B cell (primary cell): ENCODE measurements at regions of chr10 and their contacts with region 1.

Region 1: GRCh38 chr10:119207367-119207668 is at the start of gene GRK5:
- DNase-seq: peak; percentile 98
- ATAC-seq: peak; percentile 83
- H3K4me3 ChIP-seq: peak within 1 kb of the TSS; percentile 44 to 94 (median 74)
- H3K4me3 Mint-ChIP-seq: peak within 1 kb of the TSS; percentile 95
- H3K27ac ChIP-seq: peak within 1 kb of the TSS; percentile 73 to 83
- H3K27ac Mint-ChIP-seq: peak within 1 kb of the TSS; percentile 95
- H3K4me1 ChIP-seq: peaks cover 27 to 38% of the 10 kb centered on the region in 2 donors
- H3K4me1 Mint-ChIP-seq: peaks cover 43% of the 10 kb centered on the region
- H3K27me3 ChIP-seq: no peaks in the 10 kb centered on the region
- H3K27me3 Mint-ChIP-seq: no peaks in the 10 kb centered on the region
- CTCF ChIP-seq: no peak
- total RNA-seq, gene GRK5: 54.8 and 57.2 TPM in 2 replicates

Region 2: DNA sequence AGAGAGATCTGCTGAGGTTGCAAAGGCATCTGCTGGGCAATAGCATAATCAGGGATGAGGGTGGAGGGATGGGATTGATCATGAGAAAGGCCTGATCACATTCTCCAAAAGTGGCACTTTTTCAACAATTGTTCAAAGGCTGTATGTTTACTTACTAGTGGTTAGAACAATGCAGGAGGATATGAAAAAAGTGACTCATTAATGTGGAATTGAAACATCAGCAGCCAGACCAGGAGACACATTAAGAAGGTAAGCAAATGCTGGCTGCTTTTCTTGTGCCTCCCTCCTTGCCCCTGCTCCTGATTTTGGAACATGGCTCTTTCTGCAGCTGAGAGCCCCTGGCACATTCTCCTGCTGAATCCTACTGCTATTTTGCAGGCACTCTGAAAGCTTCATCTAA is 928.7 kb before region 1 on chr10:
- CTCF ChIA-PET with region 1: no interaction called
- POLR2A ChIA-PET with region 1: no interaction called
- intact Hi-C with region 1: no loop called
- DNase-seq: no peak
- ATAC-seq: no peak
- H3K4me3 ChIP-seq: no peak overlapping the region
- H3K4me3 Mint-ChIP-seq: no peak overlapping the region
- H3K27ac ChIP-seq: no peak overlapping the region
- H3K27ac Mint-ChIP-seq: no peak overlapping the region
- H3K4me1 ChIP-seq: no peaks in the 10 kb centered on the region
- H3K4me1 Mint-ChIP-seq: no peaks in the 10 kb centered on the region
- H3K27me3 ChIP-seq: peaks cover 0 to 3% (median 2%) of the 10 kb centered on the region in 4 experiments
- H3K27me3 Mint-ChIP-seq: peaks cover 4% of the 10 kb centered on the region
- CTCF ChIP-seq: no peak

Region 3: GRCh38 chr10:119165171-119166110 is 41.9 kb before region 1 on chr10 and contains the start of gene SFXN4:
- CTCF ChIA-PET with region 1: interaction called, 4 read pairs
- POLR2A ChIA-PET with region 1: no interaction called
- intact Hi-C with region 1: loop called (anchors 1 kb)
- DNase-seq: peak; percentile 89
- ATAC-seq: peak; percentile 92
- H3K4me3 ChIP-seq: peak within 1 kb of the TSS; percentile 46 to 86 (median 79)
- H3K4me3 Mint-ChIP-seq: peak within 1 kb of the TSS; percentile 96
- H3K27ac ChIP-seq: peak within 1 kb of the TSS; percentile 72 to 80
- H3K27ac Mint-ChIP-seq: peak within 1 kb of the TSS; percentile 93
- H3K4me1 ChIP-seq: peaks cover 7 to 19% of the 10 kb centered on the region in 2 donors
- H3K4me1 Mint-ChIP-seq: peaks cover 20% of the 10 kb centered on the region
- H3K27me3 ChIP-seq: no peaks in the 10 kb centered on the region
- H3K27me3 Mint-ChIP-seq: no peaks in the 10 kb centered on the region
- CTCF ChIP-seq: no peak
- total RNA-seq, gene SFXN4: 8.4 and 9.8 TPM in 2 replicates

Region 4: GRCh38 chr10:119246862-119247549 is 39.7 kb after region 1 on chr10:
- CTCF ChIA-PET with region 1: interaction called, 7 read pairs
- POLR2A ChIA-PET with region 1: no interaction called
- intact Hi-C with region 1: loop called (anchors 5 kb)
- DNase-seq: no peak
- ATAC-seq: no peak
- H3K4me3 ChIP-seq: no peak overlapping the region
- H3K4me3 Mint-ChIP-seq: no peak overlapping the region
- H3K27ac ChIP-seq: no peak overlapping the region
- H3K27ac Mint-ChIP-seq: no peak overlapping the region
- H3K4me1 ChIP-seq: peaks cover 0 to 8% of the 10 kb centered on the region in 2 donors
- H3K4me1 Mint-ChIP-seq: peaks cover 33% of the 10 kb centered on the region
- H3K27me3 ChIP-seq: no peaks in the 10 kb centered on the region
- H3K27me3 Mint-ChIP-seq: no peaks in the 10 kb centered on the region
- CTCF ChIP-seq: no peak

Region 5: DNA sequence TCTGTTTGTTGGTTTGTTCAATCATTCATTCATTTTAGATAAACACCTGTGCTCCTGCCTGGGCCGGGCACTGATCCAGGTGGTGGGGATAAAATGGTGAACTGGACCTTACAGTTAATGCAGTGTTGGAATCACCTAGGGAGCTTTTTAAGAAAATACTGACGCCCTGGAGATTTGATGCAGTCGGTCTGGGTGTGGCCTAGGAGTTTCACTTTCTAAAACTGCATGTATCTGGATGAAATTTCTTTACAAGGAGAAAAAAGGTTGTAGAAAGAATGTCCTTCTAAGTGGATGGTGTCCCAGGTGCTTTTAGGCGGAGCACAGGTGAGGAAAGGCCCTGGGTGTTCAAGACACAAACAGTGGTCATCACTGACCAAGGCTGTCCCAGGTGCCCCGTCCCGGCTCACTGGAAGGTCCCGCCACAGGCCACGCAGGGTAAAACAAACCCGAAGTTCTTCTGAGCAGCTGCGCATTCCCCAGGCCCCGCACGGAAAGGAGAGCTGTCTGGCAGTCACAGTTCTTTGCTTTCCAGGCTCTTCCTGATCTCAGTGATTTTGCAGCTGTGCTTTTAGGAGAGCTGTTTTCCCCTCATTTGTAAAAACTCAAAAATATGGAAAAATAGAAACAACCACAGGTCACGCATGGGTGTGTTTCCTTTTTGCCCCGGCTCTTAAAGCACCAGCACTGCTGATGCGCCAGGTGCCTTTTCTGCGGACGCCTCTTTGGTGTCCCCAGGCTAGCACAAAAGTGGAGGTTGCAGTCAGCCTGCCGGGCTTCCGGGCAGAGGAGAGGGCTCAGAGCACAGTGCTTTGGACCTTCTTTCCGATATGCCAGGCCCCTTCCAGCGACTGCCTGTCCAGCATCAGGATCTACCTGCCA is 161.9 kb after region 1 on chr10:
- CTCF ChIA-PET with region 1: interaction called, 14 read pairs
- POLR2A ChIA-PET with region 1: interaction called, 3 read pairs
- intact Hi-C with region 1: loop called (anchors 1 kb)
- DNase-seq: peak; percentile 75
- ATAC-seq: peak; percentile 76
- H3K4me3 ChIP-seq: peak overlapping the region; percentile 18 to 60 (median 55)
- H3K4me3 Mint-ChIP-seq: peak overlapping the region; percentile 90
- H3K27ac ChIP-seq: peak overlapping the region; percentile 73 to 75
- H3K27ac Mint-ChIP-seq: peak overlapping the region; percentile 97
- H3K4me1 ChIP-seq: peaks cover 59 to 62% of the 10 kb centered on the region in 2 donors
- H3K4me1 Mint-ChIP-seq: peaks cover 66% of the 10 kb centered on the region
- H3K27me3 ChIP-seq: no peaks in the 10 kb centered on the region
- H3K27me3 Mint-ChIP-seq: no peaks in the 10 kb centered on the region
- CTCF ChIP-seq: no peak

Region 6: DNA sequence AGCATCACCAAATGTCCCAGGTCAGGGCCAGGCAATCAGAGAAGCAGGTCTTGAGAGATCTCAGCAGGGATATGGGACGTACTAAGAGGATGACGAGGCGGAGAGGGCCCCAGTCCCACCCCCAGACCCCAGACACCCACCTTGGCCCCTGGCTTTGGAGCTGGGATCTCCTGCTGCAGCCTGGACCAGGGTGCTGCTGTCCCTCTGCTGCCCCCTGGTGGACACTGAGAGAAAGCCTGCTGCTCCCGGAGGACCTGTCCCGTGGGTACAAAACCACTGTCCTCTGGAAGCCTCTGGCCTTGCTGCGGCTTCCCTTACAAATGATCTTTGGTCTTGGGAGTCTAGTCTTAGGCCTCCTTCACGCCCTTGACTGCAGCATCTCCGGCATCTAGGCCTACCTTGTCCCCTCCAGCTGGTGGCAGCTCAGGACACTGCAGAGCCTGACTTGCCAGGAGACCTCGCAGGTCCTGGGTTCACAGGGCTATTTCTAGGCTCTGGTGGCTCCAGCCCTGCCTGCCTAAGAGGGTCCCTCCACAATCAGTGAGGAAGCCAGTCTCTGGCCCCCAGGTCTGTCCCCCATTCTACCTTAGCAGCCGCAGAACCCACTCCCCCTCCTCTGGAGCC is 238.1 kb after region 1 on chr10:
- CTCF ChIA-PET with region 1: interaction called, 144 read pairs
- POLR2A ChIA-PET with region 1: interaction called, 7 read pairs
- intact Hi-C with region 1: loop called (anchors 1 kb)
- DNase-seq: peak; percentile 86
- ATAC-seq: peak; percentile 75
- H3K4me3 ChIP-seq: no peak overlapping the region
- H3K4me3 Mint-ChIP-seq: no peak overlapping the region
- H3K27ac ChIP-seq: no peak overlapping the region
- H3K27ac Mint-ChIP-seq: peak overlapping the region; percentile 61
- H3K4me1 ChIP-seq: peaks cover 17 to 29% of the 10 kb centered on the region in 2 donors
- H3K4me1 Mint-ChIP-seq: peaks cover 35% of the 10 kb centered on the region
- H3K27me3 ChIP-seq: no peaks in the 10 kb centered on the region
- H3K27me3 Mint-ChIP-seq: no peaks in the 10 kb centered on the region
- CTCF ChIP-seq: peak; percentile 93

Region 7: DNA sequence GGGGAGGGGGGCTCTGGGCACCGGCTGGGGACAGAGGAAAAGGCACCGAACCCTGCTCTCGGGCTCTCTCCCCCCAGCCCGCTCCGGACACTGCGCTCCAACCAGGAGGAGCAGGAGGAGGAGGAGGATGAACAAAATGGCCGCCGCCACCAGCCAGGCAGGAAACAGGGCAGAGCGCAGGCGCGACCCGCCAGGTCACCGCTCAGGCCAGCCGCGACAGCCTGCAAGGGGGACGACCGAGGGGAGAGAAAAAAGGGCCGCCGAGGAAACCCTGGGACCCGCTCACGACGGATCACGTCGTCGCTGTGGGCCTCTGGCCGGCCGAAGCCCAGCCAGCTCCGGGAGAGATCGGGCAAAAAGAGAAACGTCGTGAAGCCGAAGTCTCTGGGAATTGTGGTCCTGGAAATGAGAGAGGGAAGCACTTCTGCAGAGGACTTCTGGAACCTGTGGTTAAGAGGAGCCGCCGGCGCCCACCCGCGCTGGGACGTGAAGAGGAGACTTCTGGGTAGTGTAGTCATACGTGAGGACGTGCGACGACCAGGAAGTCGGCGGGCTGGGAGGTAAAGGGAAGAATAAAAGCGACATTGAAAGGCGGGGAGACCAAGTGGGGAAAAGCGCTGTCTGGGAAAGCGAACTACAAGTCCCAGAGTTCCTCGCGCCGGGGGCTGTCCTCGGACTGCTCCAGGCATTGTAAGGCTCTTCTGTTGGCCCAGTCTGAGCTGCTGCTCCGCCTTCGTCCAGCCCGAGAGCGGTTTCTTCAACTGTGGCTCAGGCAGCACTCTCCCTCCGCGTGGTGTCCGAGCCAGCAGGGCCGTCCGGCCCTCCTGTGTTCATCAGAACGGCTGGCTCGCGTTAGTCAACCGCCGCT is 389.5 kb after region 1 on chr10 and contains the start of gene TIAL1:
- CTCF ChIA-PET with region 1: interaction called, 4 read pairs
- POLR2A ChIA-PET with region 1: no interaction called
- intact Hi-C with region 1: loop called (anchors 1 kb)
- DNase-seq: peak; percentile 96
- ATAC-seq: peak; percentile 86
- H3K4me3 ChIP-seq: peak within 1 kb of the TSS; percentile 86 to 97 (median 90)
- H3K4me3 Mint-ChIP-seq: peak within 1 kb of the TSS; percentile 99
- H3K27ac ChIP-seq: peak within 1 kb of the TSS; percentile 88 to 94
- H3K27ac Mint-ChIP-seq: peak within 1 kb of the TSS; percentile 98
- H3K4me1 ChIP-seq: peaks cover 31 to 43% of the 10 kb centered on the region in 2 donors
- H3K4me1 Mint-ChIP-seq: peaks cover 54% of the 10 kb centered on the region
- H3K27me3 ChIP-seq: no peaks in the 10 kb centered on the region
- H3K27me3 Mint-ChIP-seq: no peaks in the 10 kb centered on the region
- CTCF ChIP-seq: no peak
- total RNA-seq, gene TIAL1: 159 and 175 TPM in 2 replicates